Panc1 (cell line): ENCODE measurements at regions of chr4 and their contacts with region 1.

Region 1: GRCh38 chr4:19844446-19844845 is 407.3 kb upstream of the SLIT2 start:
- DNase-seq: no peak
- ATAC-seq: no peak
- H3K4me3 ChIP-seq: no peak overlapping the region
- H3K27ac ChIP-seq: no peak overlapping the region
- H3K4me1 ChIP-seq: no peaks in the 10 kb centered on the region
- H3K27me3 ChIP-seq: no peaks in the 10 kb centered on the region
- CTCF ChIP-seq: no peak

Region 2: DNA sequence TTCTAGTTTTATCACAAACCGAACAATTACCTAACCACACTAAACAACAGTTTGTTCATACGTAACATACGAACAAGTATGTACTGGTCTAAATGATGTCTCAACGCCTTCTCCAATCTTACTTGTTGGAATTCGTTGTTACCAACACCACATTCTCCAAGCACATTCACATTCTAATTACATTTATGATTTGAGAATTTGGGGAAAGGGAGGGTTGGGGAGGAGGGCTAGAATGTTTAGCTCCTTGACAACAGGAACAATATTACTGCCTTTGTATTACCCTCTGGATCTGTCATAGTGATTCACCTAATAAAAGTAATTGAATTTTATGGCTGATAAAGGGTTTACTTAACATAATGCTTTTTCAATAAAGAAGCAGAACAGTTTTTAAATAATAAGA is 1847.3 kb before region 1 on chr4:
- CTCF ChIA-PET with region 1: no interaction called
- POLR2A ChIA-PET with region 1: interaction called, 12 read pairs
- in situ Hi-C with region 1: no loop called
- intact Hi-C with region 1: no loop called
- DNase-seq: no peak
- ATAC-seq: no peak
- H3K4me3 ChIP-seq: no peak overlapping the region
- H3K27ac ChIP-seq: no peak overlapping the region
- H3K4me1 ChIP-seq: no peaks in the 10 kb centered on the region
- H3K27me3 ChIP-seq: no peaks in the 10 kb centered on the region
- CTCF ChIP-seq: no peak

Region 3: GRCh38 chr4:19689511-19689910 is 154.9 kb before region 1 on chr4:
- CTCF ChIA-PET with region 1: no interaction called
- POLR2A ChIA-PET with region 1: no interaction called
- in situ Hi-C with region 1: no loop called
- intact Hi-C with region 1: no loop called
- DNase-seq: no peak
- ATAC-seq: no peak
- H3K4me3 ChIP-seq: no peak overlapping the region
- H3K27ac ChIP-seq: no peak overlapping the region
- H3K4me1 ChIP-seq: no peaks in the 10 kb centered on the region
- H3K27me3 ChIP-seq: no peaks in the 10 kb centered on the region
- CTCF ChIP-seq: no peak

Region 4: DNA sequence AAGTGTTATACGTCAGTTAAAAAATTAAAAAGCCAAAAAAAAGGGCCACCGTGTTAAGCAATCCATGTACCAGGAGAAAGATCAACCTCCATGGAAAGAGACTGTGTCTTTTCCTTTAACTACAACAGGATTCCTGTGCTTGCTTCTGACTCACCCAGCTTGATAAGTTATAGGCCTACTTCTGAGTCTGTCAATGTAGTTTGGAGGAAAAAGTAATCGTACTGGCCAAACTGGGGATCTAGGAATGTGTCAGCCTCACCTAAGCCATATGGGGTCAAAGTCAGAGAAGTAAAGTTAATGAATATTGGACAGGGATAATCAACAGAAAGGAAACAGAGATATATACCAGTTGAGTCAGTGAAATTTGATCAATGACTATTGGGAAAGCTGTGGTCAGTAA is 63.6 kb before region 1 on chr4:
- CTCF ChIA-PET with region 1: no interaction called
- POLR2A ChIA-PET with region 1: no interaction called
- in situ Hi-C with region 1: no loop called
- intact Hi-C with region 1: no loop called
- DNase-seq: no peak
- ATAC-seq: no peak
- H3K4me3 ChIP-seq: no peak overlapping the region
- H3K27ac ChIP-seq: no peak overlapping the region
- H3K4me1 ChIP-seq: peaks cover 3% of the 10 kb centered on the region
- H3K27me3 ChIP-seq: no peaks in the 10 kb centered on the region
- CTCF ChIP-seq: no peak